ENCODE measurements at regions of chr15 and their contacts with region 1.

Region 1: DNA sequence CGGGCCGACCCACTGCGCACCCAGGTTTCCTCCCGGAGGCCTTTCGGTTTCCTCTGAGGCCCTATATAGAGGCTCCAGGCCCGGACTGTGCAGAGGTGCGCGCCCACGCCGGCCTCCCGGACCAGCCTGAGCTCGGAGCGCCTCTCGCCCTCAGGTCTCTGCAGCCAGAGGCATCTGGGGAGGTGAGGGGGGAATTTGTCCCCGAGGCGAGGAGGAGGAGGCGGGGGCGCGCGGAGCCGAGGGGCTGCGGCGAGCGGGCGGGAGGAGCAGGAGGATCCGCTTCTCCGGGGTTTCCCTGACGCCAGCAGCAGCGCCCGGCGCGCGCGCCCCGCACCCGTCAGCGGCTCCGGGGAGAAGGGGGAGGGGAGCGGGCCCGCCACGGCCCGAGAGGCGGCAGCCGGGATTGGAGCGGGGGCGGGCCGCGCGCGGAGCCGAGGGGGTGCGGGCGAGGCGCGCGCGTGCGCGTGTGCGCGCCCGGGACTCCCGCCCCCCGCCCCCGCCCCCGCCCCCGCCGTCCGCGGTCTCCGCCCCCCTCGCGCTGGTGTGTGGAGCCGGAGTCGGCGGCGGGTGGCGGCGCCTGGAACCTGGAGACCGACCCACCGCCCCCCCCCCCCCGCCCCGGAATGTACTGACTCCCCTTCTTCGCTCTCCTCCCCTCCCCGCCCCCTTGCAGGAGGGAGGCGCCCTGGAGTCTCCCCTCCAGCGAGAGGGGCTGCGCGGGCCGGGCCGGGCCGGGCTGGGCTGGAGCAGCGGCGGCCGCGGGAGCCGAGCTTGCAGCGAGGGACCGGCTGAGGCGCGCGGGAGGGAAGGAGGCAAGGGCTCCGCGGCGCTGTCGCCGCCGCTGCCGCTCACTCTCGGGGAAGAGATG is at the start of gene NEO1:
- DNase-seq: peak; percentile 84

Region 2: DNA sequence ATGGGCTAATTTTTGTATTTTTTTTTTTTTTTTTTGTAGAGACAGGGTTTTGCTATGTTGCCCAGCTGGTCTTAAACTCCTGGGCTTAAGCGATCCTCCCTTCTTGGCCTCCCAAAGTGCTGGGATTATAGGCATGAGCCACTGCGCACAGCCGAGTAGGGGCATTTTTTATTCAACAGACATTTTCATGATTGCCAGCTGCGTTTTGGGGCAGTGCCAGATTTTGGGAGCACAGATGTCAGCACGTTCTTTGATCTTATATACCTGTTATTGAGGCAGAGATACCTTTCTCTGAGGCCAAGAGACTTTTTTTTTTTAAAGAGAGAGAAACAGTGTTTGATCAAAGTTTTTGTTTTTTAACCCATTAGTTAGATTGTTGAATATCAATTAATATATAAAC is 17.1 kb after region 1 on chr15:
- CTCF ChIA-PET with region 1: no interaction called
- POLR2A ChIA-PET with region 1: interaction called, 10 read pairs
- DNase-seq: no peak

Region 3: GRCh38 chr15:73087098-73087497 is 35.1 kb after region 1 on chr15:
- CTCF ChIA-PET with region 1: no interaction called
- POLR2A ChIA-PET with region 1: no interaction called
- DNase-seq: no peak

Region 4: DNA sequence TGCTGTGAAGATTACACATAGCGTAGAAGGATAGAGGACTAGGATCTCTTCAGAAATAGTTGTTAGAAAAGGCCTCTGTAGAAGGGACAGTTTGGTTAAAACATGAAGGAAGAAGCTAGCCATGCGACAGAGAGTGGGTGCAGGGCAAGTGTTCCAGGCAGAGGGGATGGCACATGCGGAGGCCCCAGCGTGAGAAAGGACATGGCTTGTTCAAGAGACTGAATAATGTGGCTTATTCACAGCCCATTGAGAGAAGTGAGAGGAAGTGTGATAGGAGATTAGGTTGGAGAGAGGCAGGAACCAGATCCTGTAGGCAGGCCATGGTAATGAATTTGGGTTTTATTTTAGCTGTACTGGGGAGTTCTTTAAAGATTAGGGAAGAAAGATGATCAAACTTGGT is 56.6 kb after region 1 on chr15:
- CTCF ChIA-PET with region 1: no interaction called
- POLR2A ChIA-PET with region 1: no interaction called
- DNase-seq: no peak